ENCODE measurements at regions of chr15 and their contacts with region 1.

Region 1: GRCh38 chr15:57146506-57147201 is 228.2 kb downstream of the TCF12 start:
- DNase-seq: peak; percentile 73
- ATAC-seq: no peak
- H3K4me3 ChIP-seq: no peak overlapping the region
- H3K4me3 Mint-ChIP-seq: peak overlapping the region; percentile 57
- H3K27ac ChIP-seq: no peak overlapping the region
- H3K27ac Mint-ChIP-seq: no peak overlapping the region
- H3K4me1 ChIP-seq: peaks cover 12 to 15% of the 10 kb centered on the region in 2 donors
- H3K4me1 Mint-ChIP-seq: peaks cover 11% of the 10 kb centered on the region
- H3K27me3 ChIP-seq: no peaks in the 10 kb centered on the region
- H3K27me3 Mint-ChIP-seq: no peaks in the 10 kb centered on the region
- CTCF ChIP-seq: peak; percentile 96

Region 2: DNA sequence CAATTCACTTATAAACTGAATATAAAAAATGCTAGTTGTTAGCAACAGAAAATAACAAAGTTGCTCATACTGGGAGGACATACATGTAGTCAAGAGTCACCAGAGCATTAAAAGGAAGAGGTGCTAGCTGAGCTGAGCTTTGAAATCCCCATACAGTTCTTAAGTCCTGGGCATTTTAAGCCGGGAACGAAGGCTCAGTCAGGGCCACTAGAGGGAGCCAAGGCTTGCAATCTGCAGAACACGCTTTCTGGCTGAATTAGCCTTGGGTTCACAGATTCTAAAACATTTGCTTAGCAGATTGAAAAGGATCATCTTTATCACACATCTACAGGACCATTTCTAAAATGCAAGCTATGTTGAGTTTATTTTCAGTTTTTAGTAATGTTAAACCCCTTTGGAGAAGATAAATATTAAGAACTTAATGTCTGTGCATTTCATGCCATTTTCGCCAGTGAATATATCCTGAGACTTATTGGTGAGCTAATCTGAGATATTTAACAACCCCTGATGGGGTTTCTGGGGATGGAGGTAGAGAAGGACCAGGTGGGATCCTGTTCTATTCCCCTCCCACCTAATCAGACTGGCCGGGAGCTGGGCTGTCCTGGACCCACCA is 655.4 kb before region 1 on chr15:
- CTCF ChIA-PET with region 1: interaction called, 14 read pairs
- POLR2A ChIA-PET with region 1: no interaction called
- intact Hi-C with region 1: no loop called
- DNase-seq: peak; percentile 75
- ATAC-seq: peak; percentile 81
- H3K4me3 ChIP-seq: no peak overlapping the region
- H3K4me3 Mint-ChIP-seq: no peak overlapping the region
- H3K27ac ChIP-seq: no peak overlapping the region
- H3K27ac Mint-ChIP-seq: no peak overlapping the region
- H3K4me1 ChIP-seq: no peaks in the 10 kb centered on the region
- H3K4me1 Mint-ChIP-seq: no peaks in the 10 kb centered on the region
- H3K27me3 ChIP-seq: no peaks in the 10 kb centered on the region
- H3K27me3 Mint-ChIP-seq: no peaks in the 10 kb centered on the region
- CTCF ChIP-seq: peak; percentile 90

Region 3: GRCh38 chr15:56616529-56616928 is 530.1 kb before region 1 on chr15:
- CTCF ChIA-PET with region 1: no interaction called
- POLR2A ChIA-PET with region 1: no interaction called
- intact Hi-C with region 1: no loop called
- DNase-seq: no peak
- ATAC-seq: no peak
- H3K4me3 ChIP-seq: no peak overlapping the region
- H3K4me3 Mint-ChIP-seq: no peak overlapping the region
- H3K27ac ChIP-seq: no peak overlapping the region
- H3K27ac Mint-ChIP-seq: no peak overlapping the region
- H3K4me1 ChIP-seq: peaks cover 0 to 3% of the 10 kb centered on the region in 2 donors
- H3K4me1 Mint-ChIP-seq: peaks cover 4% of the 10 kb centered on the region
- H3K27me3 ChIP-seq: no peaks in the 10 kb centered on the region
- H3K27me3 Mint-ChIP-seq: peaks cover 8% of the 10 kb centered on the region
- CTCF ChIP-seq: no peak

Region 4: GRCh38 chr15:56918046-56918938 is 228.4 kb before region 1 on chr15 and contains the start of gene TCF12:
- CTCF ChIA-PET with region 1: interaction called, 12 read pairs
- POLR2A ChIA-PET with region 1: no interaction called
- intact Hi-C with region 1: no loop called
- DNase-seq: peak; percentile 97
- ATAC-seq: peak; percentile 74
- H3K4me3 ChIP-seq: peak within 1 kb of the TSS; percentile 80 to 92 (median 89)
- H3K4me3 Mint-ChIP-seq: peak within 1 kb of the TSS; percentile 93
- H3K27ac ChIP-seq: peak within 1 kb of the TSS; percentile 79 to 86
- H3K27ac Mint-ChIP-seq: peak within 1 kb of the TSS; percentile 92
- H3K4me1 ChIP-seq: peaks cover 19 to 21% of the 10 kb centered on the region in 2 donors
- H3K4me1 Mint-ChIP-seq: peaks cover 32% of the 10 kb centered on the region
- H3K27me3 ChIP-seq: no peaks in the 10 kb centered on the region
- H3K27me3 Mint-ChIP-seq: no peaks in the 10 kb centered on the region
- CTCF ChIP-seq: peak; percentile 59
- total RNA-seq, gene TCF12: 131 TPM in 2 replicates

Region 5: GRCh38 chr15:56929399-56929798 is 217.3 kb before region 1 on chr15:
- CTCF ChIA-PET with region 1: no interaction called
- POLR2A ChIA-PET with region 1: no interaction called
- intact Hi-C with region 1: no loop called
- DNase-seq: no peak
- ATAC-seq: no peak
- H3K4me3 ChIP-seq: no peak overlapping the region
- H3K4me3 Mint-ChIP-seq: no peak overlapping the region
- H3K27ac ChIP-seq: no peak overlapping the region
- H3K27ac Mint-ChIP-seq: no peak overlapping the region
- H3K4me1 ChIP-seq: peaks cover 5 to 11% of the 10 kb centered on the region in 2 donors
- H3K4me1 Mint-ChIP-seq: peaks cover 60% of the 10 kb centered on the region
- H3K27me3 ChIP-seq: no peaks in the 10 kb centered on the region
- H3K27me3 Mint-ChIP-seq: no peaks in the 10 kb centered on the region
- CTCF ChIP-seq: no peak

Region 6: GRCh38 chr15:57060799-57061198 is 85.9 kb before region 1 on chr15:
- CTCF ChIA-PET with region 1: no interaction called
- POLR2A ChIA-PET with region 1: no interaction called
- intact Hi-C with region 1: no loop called
- DNase-seq: no peak
- ATAC-seq: no peak
- H3K4me3 ChIP-seq: no peak overlapping the region
- H3K4me3 Mint-ChIP-seq: no peak overlapping the region
- H3K27ac ChIP-seq: no peak overlapping the region
- H3K27ac Mint-ChIP-seq: no peak overlapping the region
- H3K4me1 ChIP-seq: no peaks in the 10 kb centered on the region
- H3K4me1 Mint-ChIP-seq: peaks cover 22% of the 10 kb centered on the region
- H3K27me3 ChIP-seq: no peaks in the 10 kb centered on the region
- H3K27me3 Mint-ChIP-seq: no peaks in the 10 kb centered on the region
- CTCF ChIP-seq: no peak

Region 7: GRCh38 chr15:57158589-57158988 is 11.9 kb after region 1 on chr15:
- CTCF ChIA-PET with region 1: interaction called, 31 read pairs
- POLR2A ChIA-PET with region 1: no interaction called
- intact Hi-C with region 1: no loop called
- DNase-seq: no peak
- ATAC-seq: no peak
- H3K4me3 ChIP-seq: no peak overlapping the region
- H3K4me3 Mint-ChIP-seq: no peak overlapping the region
- H3K27ac ChIP-seq: no peak overlapping the region
- H3K27ac Mint-ChIP-seq: no peak overlapping the region
- H3K4me1 ChIP-seq: no peaks in the 10 kb centered on the region
- H3K4me1 Mint-ChIP-seq: peaks cover 7% of the 10 kb centered on the region
- H3K27me3 ChIP-seq: no peaks in the 10 kb centered on the region
- H3K27me3 Mint-ChIP-seq: no peaks in the 10 kb centered on the region
- CTCF ChIP-seq: no peak

Region 8: GRCh38 chr15:57213862-57214261 is 67.2 kb after region 1 on chr15:
- CTCF ChIA-PET with region 1: interaction called, 43 read pairs
- POLR2A ChIA-PET with region 1: no interaction called
- intact Hi-C with region 1: loop called (anchors 2 kb)
- DNase-seq: peak; percentile 57
- ATAC-seq: peak; percentile 39
- H3K4me3 ChIP-seq: no peak overlapping the region
- H3K4me3 Mint-ChIP-seq: no peak overlapping the region
- H3K27ac ChIP-seq: no peak overlapping the region
- H3K27ac Mint-ChIP-seq: peak overlapping the region; percentile 0
- H3K4me1 ChIP-seq: peaks cover 7 to 18% of the 10 kb centered on the region in 2 donors
- H3K4me1 Mint-ChIP-seq: peaks cover 31% of the 10 kb centered on the region
- H3K27me3 ChIP-seq: no peaks in the 10 kb centered on the region
- H3K27me3 Mint-ChIP-seq: no peaks in the 10 kb centered on the region
- CTCF ChIP-seq: peak; percentile 54

Region 9: DNA sequence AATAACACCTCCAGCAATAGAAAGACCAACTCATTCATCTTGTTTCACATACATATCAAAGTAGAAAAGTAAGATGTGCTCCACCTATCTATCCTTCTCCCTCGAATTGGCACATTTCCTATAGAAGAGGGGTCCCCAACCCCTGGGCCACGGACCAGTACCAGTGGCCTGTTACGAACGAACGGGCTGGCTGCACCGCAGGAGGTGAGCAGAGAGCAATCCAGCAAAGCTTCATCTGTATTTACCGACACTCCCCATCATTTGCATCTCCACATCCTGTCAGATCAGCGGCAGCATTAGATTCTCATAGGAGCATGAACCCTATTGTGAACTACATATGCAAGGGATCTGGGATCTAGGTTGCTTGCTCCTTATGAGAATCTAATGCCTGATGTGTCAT is 134.7 kb after region 1 on chr15:
- CTCF ChIA-PET with region 1: interaction called, 11 read pairs
- POLR2A ChIA-PET with region 1: no interaction called
- intact Hi-C with region 1: no loop called
- DNase-seq: peak; percentile 73
- ATAC-seq: peak; percentile 63
- H3K4me3 ChIP-seq: peak overlapping the region; percentile 18 to 64 (median 55)
- H3K4me3 Mint-ChIP-seq: peak overlapping the region; percentile 91
- H3K27ac ChIP-seq: peak overlapping the region; percentile 95
- H3K27ac Mint-ChIP-seq: peak overlapping the region; percentile 94
- H3K4me1 ChIP-seq: peaks cover 71 to 72% of the 10 kb centered on the region in 2 donors
- H3K4me1 Mint-ChIP-seq: peaks cover 75% of the 10 kb centered on the region
- H3K27me3 ChIP-seq: no peaks in the 10 kb centered on the region
- H3K27me3 Mint-ChIP-seq: no peaks in the 10 kb centered on the region
- CTCF ChIP-seq: no peak

Region 10: GRCh38 chr15:57527382-57528091 is 380.9 kb after region 1 on chr15:
- CTCF ChIA-PET with region 1: interaction called, 210 read pairs
- POLR2A ChIA-PET with region 1: no interaction called
- intact Hi-C with region 1: no loop called
- DNase-seq: peak; percentile 88
- ATAC-seq: peak; percentile 99
- H3K4me3 ChIP-seq: no peak overlapping the region
- H3K4me3 Mint-ChIP-seq: no peak overlapping the region
- H3K27ac ChIP-seq: no peak overlapping the region
- H3K27ac Mint-ChIP-seq: no peak overlapping the region
- H3K4me1 ChIP-seq: peaks cover 6 to 10% of the 10 kb centered on the region in 2 donors
- H3K4me1 Mint-ChIP-seq: peaks cover 15% of the 10 kb centered on the region
- H3K27me3 ChIP-seq: no peaks in the 10 kb centered on the region
- H3K27me3 Mint-ChIP-seq: no peaks in the 10 kb centered on the region
- CTCF ChIP-seq: peak; percentile 80